Ovary (tissue), 10 donors: ENCODE measurements at regions of chr22 and their contacts with region 1.

Region 1: DNA sequence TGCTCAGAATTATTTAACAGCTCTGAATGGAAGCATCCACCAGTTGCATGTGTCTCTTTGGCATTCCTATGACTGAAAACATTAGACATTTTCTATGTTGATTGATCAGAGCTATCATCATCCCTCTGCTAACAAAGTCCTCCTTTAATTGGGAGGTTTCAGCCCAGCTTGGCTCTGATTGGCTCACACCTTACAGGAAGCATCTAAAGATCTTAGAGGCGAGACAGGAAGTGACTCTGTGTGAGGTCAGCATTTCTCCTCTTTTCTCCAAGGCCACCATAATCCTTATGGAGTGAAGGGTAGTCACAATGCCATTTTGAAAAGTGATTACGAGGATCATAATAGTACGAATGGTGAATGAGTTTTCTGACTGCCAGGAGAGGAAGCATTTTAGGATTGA is 260.8 kb downstream of the MIAT start:
- DNase-seq: no peak
- H3K4me3 ChIP-seq: no peak overlapping the region
- H3K27ac ChIP-seq: no peak overlapping the region
- H3K4me1 ChIP-seq: no peaks in the 10 kb centered on the region
- H3K27me3 ChIP-seq: no peaks in the 10 kb centered on the region
- CTCF ChIP-seq: no peak
- EP300 ChIP-seq: no peak
- POLR2A ChIP-seq: no peak

Region 2: GRCh38 chr22:26822299-26822698 is 95.9 kb before region 1 on chr22:
- intact Hi-C with region 1: no loop called
- DNase-seq: no peak
- H3K4me3 ChIP-seq: no peak overlapping the region
- H3K27ac ChIP-seq: no peak overlapping the region
- H3K4me1 ChIP-seq: no peaks in the 10 kb centered on the region
- H3K27me3 ChIP-seq: no peaks in the 10 kb centered on the region
- CTCF ChIP-seq: no peak
- EP300 ChIP-seq: no peak
- POLR2A ChIP-seq: no peak

Region 3: GRCh38 chr22:26968859-26969523 is 50.8 kb after region 1 on chr22:
- intact Hi-C with region 1: loop called in 1 of 4 experiments (anchors 5 kb)
- DNase-seq: no peak
- H3K4me3 ChIP-seq: no peak overlapping the region
- H3K27ac ChIP-seq: no peak overlapping the region
- H3K4me1 ChIP-seq: no peaks in the 10 kb centered on the region
- H3K27me3 ChIP-seq: no peaks in the 10 kb centered on the region
- CTCF ChIP-seq: no peak
- EP300 ChIP-seq: no peak
- POLR2A ChIP-seq: no peak

Region 4: DNA sequence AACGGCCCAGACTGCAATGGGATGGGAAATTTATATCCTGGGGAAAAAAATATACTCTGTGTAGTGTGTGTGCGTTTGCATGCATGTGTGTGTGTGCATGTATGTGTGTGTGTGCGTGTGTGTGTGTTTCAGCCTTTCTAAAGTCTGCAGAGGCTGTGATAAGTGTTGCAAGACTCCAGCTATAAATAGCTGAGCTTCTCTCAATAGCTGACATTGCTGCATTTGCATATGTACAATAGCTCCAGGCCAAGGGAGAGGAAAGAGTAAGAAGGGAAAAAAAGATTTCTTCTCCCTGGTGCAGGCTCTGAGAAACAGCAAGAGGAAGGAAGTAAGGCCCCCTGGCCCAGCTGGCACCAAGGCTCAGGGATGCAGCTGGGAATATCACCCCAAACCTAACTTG is 400.3 kb after region 1 on chr22:
- intact Hi-C with region 1: no loop called
- DNase-seq: peak in 3 of 5 donors; percentile 45 to 59 (median 52)
- H3K4me3 ChIP-seq: no peak overlapping the region
- H3K27ac ChIP-seq: no peak overlapping the region
- H3K4me1 ChIP-seq: peaks cover 4% of the 10 kb centered on the region
- H3K27me3 ChIP-seq: no peaks in the 10 kb centered on the region
- CTCF ChIP-seq: no peak
- EP300 ChIP-seq: no peak
- POLR2A ChIP-seq: no peak